ENCODE measurements at regions of chr2 and their contacts with region 1.

Region 1: DNA sequence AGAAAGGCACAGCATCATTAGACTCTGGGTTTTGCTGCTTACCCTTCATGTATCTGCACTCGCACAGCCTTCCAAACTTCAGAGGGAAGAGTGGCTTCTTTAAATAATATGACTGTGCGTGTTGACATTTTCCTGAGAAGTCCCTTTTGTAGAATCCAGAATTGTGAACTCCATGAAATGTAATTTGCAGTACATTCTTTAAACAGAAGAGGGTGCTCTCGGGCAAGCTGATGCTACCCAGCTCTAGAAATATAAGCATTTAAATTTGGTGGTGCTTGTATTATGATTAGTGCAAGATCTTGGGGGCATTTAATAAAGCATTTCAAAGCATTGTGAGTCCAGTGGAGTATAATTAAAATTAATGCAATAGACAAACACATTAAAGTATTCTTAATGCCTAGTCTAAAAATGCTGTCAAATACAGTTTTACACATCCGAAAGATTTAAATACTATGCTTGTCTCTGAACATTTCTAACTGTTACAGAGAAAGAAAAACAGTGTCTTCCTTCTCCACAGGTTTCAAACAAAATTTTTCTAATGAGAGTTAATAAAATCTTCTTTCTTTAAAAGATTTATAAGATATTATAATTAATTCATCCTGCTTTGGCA is 17.3 kb upstream of the GTF2A1L start:
- DNase-seq: peak; percentile 67
- ATAC-seq: peak; percentile 86
- H3K4me3 ChIP-seq: no peak overlapping the region
- H3K27ac ChIP-seq: peak overlapping the region; percentile 66
- H3K4me1 ChIP-seq: peaks cover 7% of the 10 kb centered on the region
- H3K27me3 ChIP-seq: no peaks in the 10 kb centered on the region
- CTCF ChIP-seq: peak; percentile 85
- POLR2A ChIP-seq: no peak
- RAD21 ChIP-seq: peak; percentile 94

Region 2: GRCh38 chr2:48694149-48694548 is 93.8 kb after region 1 on chr2:
- CTCF ChIA-PET with region 1: no interaction called
- POLR2A ChIA-PET with region 1: no interaction called
- dilution Hi-C with region 1: no loop called
- in situ Hi-C with region 1: no loop called
- intact Hi-C with region 1: loop called (anchors 5 kb)
- DNase-seq: peak; percentile 64
- ATAC-seq: peak; percentile 83
- H3K4me3 ChIP-seq: no peak overlapping the region
- H3K27ac ChIP-seq: no peak overlapping the region; the same call in 1 of the 2 replicates
- H3K4me1 ChIP-seq: peaks cover 4% of the 10 kb centered on the region; the same call in 1 of the 2 replicates
- H3K27me3 ChIP-seq: no peaks in the 10 kb centered on the region
- CTCF ChIP-seq: no peak
- POLR2A ChIP-seq: no peak
- RAD21 ChIP-seq: no peak

Region 3: DNA sequence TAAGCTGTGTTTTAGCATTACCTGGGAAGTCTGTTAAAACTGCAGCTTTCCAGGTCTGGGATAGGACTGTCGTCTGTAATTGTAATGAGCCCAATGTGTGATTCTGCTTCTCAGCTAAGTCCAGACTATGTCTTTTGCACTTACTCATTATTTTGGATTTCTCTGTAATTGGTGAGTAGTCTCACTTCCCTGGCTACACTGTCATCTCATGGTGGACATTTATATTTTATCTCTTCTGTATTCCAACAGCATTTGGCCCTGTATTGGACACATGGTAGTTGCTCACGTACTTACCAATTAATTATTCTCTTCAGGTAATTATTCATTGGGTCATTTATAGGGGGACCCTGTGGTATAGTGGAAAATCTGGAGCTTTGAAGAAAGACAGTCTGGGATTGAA is 127.3 kb after region 1 on chr2:
- CTCF ChIA-PET with region 1: interaction called, 3 read pairs
- POLR2A ChIA-PET with region 1: no interaction called
- dilution Hi-C with region 1: no loop called
- in situ Hi-C with region 1: no loop called
- intact Hi-C with region 1: loop called (anchors 2 kb)
- DNase-seq: no peak
- ATAC-seq: no peak
- H3K4me3 ChIP-seq: no peak overlapping the region
- H3K27ac ChIP-seq: no peak overlapping the region
- H3K4me1 ChIP-seq: peaks cover 11% of the 10 kb centered on the region
- H3K27me3 ChIP-seq: no peaks in the 10 kb centered on the region
- CTCF ChIP-seq: no peak
- POLR2A ChIP-seq: no peak
- RAD21 ChIP-seq: no peak

Region 4: DNA sequence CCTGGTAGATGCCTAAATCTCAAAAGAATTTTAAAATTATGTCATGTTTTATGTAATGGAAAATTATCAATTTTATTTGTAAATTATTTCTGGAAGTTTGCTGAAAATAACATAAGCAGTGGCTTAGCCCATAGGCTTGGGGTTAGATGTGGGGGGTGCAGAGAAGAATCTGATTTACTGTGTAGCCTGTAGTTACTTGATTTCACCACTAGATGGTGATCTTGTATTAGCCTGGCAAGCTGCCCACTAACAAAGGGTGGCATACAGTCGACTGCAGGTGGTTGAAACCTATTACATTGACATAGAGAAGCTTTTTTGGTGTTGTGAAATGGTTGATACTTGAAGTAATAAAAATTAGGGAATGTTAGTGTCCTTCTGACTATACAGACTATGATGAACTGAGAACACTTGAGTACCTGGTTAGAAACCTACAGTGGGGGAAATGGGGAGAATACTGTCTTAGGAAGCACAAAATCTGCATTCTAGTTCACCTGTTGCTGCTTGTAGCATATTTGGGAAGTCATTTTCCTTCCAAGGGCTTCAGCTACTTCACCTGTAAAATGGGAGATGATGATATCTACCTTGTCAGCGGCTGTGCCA is 346.2 kb after region 1 on chr2:
- CTCF ChIA-PET with region 1: no interaction called
- POLR2A ChIA-PET with region 1: no interaction called
- dilution Hi-C with region 1: no loop called
- in situ Hi-C with region 1: loop called (anchors 10 kb)
- intact Hi-C with region 1: loop called (anchors 1 kb)
- DNase-seq: peak; percentile 43
- ATAC-seq: peak; percentile 86
- H3K4me3 ChIP-seq: no peak overlapping the region
- H3K27ac ChIP-seq: no peak overlapping the region
- H3K4me1 ChIP-seq: no peaks in the 10 kb centered on the region
- H3K27me3 ChIP-seq: no peaks in the 10 kb centered on the region; the same call in 1 of the 2 replicates
- CTCF ChIP-seq: peak; percentile 77
- POLR2A ChIP-seq: no peak
- RAD21 ChIP-seq: peak; percentile 83

Region 5: GRCh38 chr2:49332415-49332814 is 732.1 kb after region 1 on chr2:
- CTCF ChIA-PET with region 1: no interaction called
- POLR2A ChIA-PET with region 1: no interaction called
- dilution Hi-C with region 1: no loop called
- in situ Hi-C with region 1: no loop called
- intact Hi-C with region 1: loop called (anchors 5 kb)
- DNase-seq: no peak
- ATAC-seq: no peak
- H3K4me3 ChIP-seq: no peak overlapping the region
- H3K27ac ChIP-seq: no peak overlapping the region
- H3K4me1 ChIP-seq: no peaks in the 10 kb centered on the region
- H3K27me3 ChIP-seq: no peaks in the 10 kb centered on the region
- CTCF ChIP-seq: peak; percentile 20; the same call in 1 of the 2 replicates
- POLR2A ChIP-seq: no peak
- RAD21 ChIP-seq: peak; percentile 12; the same call in 1 of the 2 replicates

Region 6: GRCh38 chr2:50401772-50402653 is 1801.7 kb after region 1 on chr2:
- CTCF ChIA-PET with region 1: interaction called, 4 read pairs
- POLR2A ChIA-PET with region 1: no interaction called
- dilution Hi-C with region 1: no loop called
- in situ Hi-C with region 1: no loop called
- intact Hi-C with region 1: loop called (anchors 1 kb)
- DNase-seq: peak; percentile 52
- ATAC-seq: peak; percentile 72
- H3K4me3 ChIP-seq: no peak overlapping the region
- H3K27ac ChIP-seq: no peak overlapping the region
- H3K4me1 ChIP-seq: no peaks in the 10 kb centered on the region
- H3K27me3 ChIP-seq: no peaks in the 10 kb centered on the region
- CTCF ChIP-seq: peak; percentile 81
- POLR2A ChIP-seq: no peak
- RAD21 ChIP-seq: peak; percentile 75

Measured in IMR-90 (cell line).